ENCODE measurements at regions of chr2 and their contacts with region 1.

Region 1: DNA sequence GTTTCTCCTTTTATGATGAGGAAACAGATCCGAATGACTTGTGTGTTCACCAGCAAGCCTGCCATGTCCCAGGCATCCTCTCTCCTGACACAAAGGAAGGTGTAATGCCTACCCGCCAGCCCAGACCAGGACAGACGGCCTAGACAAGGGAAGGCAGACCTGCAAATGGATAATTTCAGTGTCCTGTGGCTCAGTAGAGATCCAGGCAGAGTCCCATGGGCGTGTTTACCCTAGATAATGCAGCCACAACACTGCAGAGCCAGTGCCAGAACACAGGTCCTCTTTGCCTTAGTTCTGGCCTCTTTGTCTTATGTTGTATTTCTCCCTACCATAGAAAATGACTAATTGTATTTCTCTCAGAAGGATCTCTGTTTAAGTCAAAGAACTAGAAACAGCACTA is 12.7 kb downstream of the TRAPPC12 start:
- DNase-seq: no peak
- H3K4me3 ChIP-seq: no peak overlapping the region
- H3K4me3 Mint-ChIP-seq: no peak overlapping the region
- H3K27ac ChIP-seq: no peak overlapping the region
- H3K27ac Mint-ChIP-seq: peak overlapping the region in 2 of 8 donors; percentile 24 to 36
- H3K4me1 ChIP-seq: peaks cover 5% of the 10 kb centered on the region
- H3K4me1 Mint-ChIP-seq: peaks cover 30 to 49% (median 38%) of the 10 kb centered on the region in 3 donors
- H3K27me3 ChIP-seq: no peaks in the 10 kb centered on the region
- H3K27me3 Mint-ChIP-seq: no peaks in the 10 kb centered on the region

Region 2: DNA sequence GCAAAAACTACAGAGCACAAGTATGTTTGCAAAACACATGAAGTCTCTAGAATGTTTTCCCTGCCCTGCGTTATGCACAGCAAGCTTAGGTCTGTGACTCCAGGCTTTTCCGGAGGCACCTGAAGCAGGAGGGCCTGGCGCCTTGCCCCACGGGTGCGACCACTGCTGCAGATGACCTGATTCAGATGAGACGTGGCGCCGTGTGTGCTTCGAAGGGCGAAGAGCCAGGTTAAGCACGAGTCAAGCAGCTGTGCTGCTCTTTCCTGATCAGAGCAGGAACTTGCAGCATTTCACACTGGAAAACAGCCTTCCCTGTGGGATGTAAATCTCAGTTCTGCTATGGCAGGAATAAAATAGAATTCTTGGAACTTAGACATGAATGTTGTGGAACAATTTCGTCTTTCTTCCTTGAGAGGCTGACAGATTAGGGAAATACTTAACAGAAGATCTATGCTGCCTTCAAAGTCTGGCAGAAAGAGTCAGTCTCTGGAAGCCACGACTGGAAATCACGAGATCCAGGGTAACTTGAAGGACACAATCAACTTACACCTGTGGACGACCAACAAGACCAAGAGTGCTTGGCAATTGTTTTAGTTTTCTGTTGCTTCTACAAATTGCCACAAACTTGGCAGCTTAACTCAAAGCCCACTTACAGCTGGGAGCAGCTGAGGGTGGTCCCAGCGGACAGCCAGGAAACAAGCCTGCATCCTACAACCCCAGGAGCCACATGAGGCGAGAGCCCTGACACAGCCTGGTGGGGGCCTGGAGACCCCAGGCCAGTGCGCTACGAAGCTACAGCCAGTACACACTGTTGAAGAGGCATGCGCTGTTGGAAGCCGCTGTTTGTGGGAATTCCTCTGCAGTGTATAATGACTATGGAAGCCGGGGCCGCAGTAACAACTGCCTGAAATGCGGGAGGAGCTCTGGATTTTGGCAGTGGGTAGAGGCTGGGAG is 57.5 kb before region 1 on chr2:
- CTCF ChIA-PET with region 1: no interaction called
- POLR2A ChIA-PET with region 1: no interaction called
- DNase-seq: no peak
- H3K4me3 ChIP-seq: no peak overlapping the region
- H3K4me3 Mint-ChIP-seq: no peak overlapping the region
- H3K27ac ChIP-seq: no peak overlapping the region
- H3K27ac Mint-ChIP-seq: peak overlapping the region in 1 of 8 donors; percentile 29
- H3K4me1 ChIP-seq: no peaks in the 10 kb centered on the region
- H3K4me1 Mint-ChIP-seq: peaks cover 4 to 6% (median 5%) of the 10 kb centered on the region in 3 donors
- H3K27me3 ChIP-seq: no peaks in the 10 kb centered on the region
- H3K27me3 Mint-ChIP-seq: peaks cover 0 to 2% of the 10 kb centered on the region in 2 donors

Region 3: DNA sequence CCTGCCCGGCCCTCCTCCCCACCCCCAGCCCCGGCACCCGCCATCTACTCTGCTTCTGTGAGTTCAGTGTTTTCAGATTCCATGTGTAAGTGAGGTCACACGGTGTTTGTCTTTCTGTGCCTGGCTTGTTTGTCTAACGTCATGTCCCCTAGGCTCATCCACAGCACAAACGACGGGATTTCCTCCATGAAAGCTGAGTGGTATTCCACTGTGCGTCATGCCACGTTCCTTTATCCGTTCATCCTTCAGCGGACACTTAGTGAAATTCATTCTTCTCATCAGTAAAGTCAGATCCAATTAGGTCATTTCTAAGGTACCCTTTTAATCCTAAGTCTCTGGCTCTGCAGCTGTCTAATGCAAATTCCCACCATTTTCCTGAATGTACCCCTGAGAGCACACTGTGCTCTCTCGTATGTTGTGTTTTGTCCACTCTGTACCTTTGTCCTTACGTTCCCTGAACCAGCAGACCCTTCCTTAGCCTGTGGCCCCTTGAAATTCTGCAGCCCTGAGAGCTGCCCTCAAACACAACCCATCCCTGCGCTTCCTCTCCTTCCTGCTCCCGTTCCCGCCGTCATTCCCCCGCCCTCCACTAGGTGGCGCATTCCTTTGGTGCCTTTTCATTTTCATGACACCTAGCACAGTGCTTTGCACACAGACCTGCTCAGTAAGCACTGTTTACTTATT is 31.4 kb after region 1 on chr2:
- CTCF ChIA-PET with region 1: interaction called, 13 read pairs
- POLR2A ChIA-PET with region 1: no interaction called
- DNase-seq: peak; percentile 44 to 78 (median 60)
- H3K4me3 ChIP-seq: no peak overlapping the region
- H3K4me3 Mint-ChIP-seq: no peak overlapping the region
- H3K27ac ChIP-seq: no peak overlapping the region
- H3K27ac Mint-ChIP-seq: peak overlapping the region in 6 of 8 donors; percentile 2 to 71 (median 26)
- H3K4me1 ChIP-seq: no peaks in the 10 kb centered on the region
- H3K4me1 Mint-ChIP-seq: peaks cover 3 to 6% (median 5%) of the 10 kb centered on the region in 3 donors
- H3K27me3 ChIP-seq: no peaks in the 10 kb centered on the region
- H3K27me3 Mint-ChIP-seq: no peaks in the 10 kb centered on the region

Region 4: DNA sequence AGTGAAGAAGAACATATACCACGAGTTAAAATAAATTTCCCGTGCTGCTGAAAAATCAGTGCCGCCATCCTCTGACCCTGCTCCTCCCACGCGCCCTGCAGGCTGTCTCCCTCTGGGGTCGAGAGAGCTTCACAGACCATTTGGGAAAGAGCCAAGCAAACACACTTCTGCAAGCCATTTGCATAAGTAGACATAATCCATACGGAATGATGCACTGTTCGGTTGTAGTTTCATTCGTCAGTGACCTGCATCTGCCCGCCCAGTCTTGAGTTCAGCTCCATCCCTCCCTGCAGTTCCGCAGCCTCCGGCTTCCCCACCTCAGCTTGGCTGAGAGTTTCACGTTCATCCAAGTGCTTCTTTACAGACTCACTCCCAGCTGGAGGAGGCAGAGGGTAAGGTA is 56.9 kb after region 1 on chr2:
- CTCF ChIA-PET with region 1: no interaction called
- POLR2A ChIA-PET with region 1: no interaction called
- DNase-seq: no peak
- H3K4me3 ChIP-seq: no peak overlapping the region
- H3K4me3 Mint-ChIP-seq: no peak overlapping the region
- H3K27ac ChIP-seq: no peak overlapping the region
- H3K27ac Mint-ChIP-seq: peak overlapping the region in 1 of 8 donors; percentile 38
- H3K4me1 ChIP-seq: no peaks in the 10 kb centered on the region
- H3K4me1 Mint-ChIP-seq: no peaks in the 10 kb centered on the region
- H3K27me3 ChIP-seq: no peaks in the 10 kb centered on the region
- H3K27me3 Mint-ChIP-seq: peaks cover 0 to 1% of the 10 kb centered on the region in 2 donors

Measured in CD8-positive, alpha-beta memory T cell (primary cell).